GM12878 (cell line): ENCODE measurements at regions of chr1 and their contacts with region 1.

Region 1: GRCh38 chr1:119367427-119368124 is 1.0 kb upstream of the HAO2 start:
- DNase-seq: no peak
- ATAC-seq: peak; percentile 82
- H3K4me3 ChIP-seq: no peak overlapping the region
- H3K27ac ChIP-seq: no peak overlapping the region
- H3K4me1 ChIP-seq: peaks cover 5% of the 10 kb centered on the region; the same call in 1 of the 2 replicates
- H3K27me3 ChIP-seq: no peaks in the 10 kb centered on the region
- CTCF ChIP-seq: peak; percentile 93 to 98 (median 94); a peak in 5 of 6 replicates
- EP300 ChIP-seq: no peak
- POLR2A ChIP-seq: no peak
- RAD21 ChIP-seq: peak; percentile 99

Region 2: DNA sequence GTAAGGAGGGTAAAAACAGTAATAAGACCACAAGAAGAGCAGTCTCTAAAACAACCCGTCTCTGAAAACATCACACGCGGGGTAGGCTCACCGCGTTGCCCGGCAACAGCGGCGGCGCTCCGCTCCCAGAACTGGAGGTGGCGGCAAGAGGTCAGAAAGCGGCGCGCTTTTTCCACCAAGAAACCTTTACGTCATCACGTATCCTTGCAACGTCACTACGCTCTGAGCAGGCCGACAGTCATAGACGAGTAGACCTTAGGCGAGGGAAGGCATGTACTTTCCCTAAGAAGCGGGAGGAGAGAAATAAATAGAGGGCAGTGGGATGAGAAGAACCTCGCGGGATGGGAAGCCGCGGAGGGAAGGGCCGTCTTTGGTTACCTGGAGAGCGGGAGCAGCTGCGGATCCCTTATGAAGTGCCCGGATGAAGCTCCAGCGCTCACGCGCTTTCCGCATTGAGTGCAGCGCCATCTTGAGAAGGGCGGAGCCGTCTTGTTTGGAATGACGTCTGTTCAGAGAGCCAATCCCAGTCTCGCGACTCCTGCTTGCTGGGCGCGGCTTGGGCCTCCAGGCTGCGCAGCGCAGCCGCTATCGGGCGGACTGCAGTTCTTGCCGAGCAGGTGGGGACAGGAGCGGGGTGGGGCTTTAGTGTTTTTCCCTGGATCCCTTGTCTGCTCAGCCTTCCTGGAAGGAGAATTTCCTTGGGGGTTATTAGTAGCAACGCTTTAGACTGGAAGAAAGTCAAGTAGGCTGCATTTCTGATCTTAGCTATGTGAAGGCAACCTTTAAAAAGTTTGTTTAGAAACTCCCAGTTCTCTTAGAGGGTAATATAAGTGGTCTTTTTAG is 227.2 kb before region 1 on chr1 and contains the start of gene WARS2:
- CTCF ChIA-PET with region 1: interaction called, 8 read pairs
- POLR2A ChIA-PET with region 1: no interaction called
- RAD21 ChIA-PET with region 1: interaction called, 7 read pairs
- SMC1A ChIA-PET with region 1: no interaction called
- in situ Hi-C with region 1: no loop called
- intact Hi-C with region 1: loop called (anchors 10 kb)
- DNase-seq: peak; percentile 93
- ATAC-seq: peak; percentile 96
- H3K4me3 ChIP-seq: peak within 1 kb of the TSS; percentile 74
- H3K27ac ChIP-seq: peak within 1 kb of the TSS; percentile 99
- H3K4me1 ChIP-seq: no peaks in the 10 kb centered on the region
- H3K27me3 ChIP-seq: no peaks in the 10 kb centered on the region
- CTCF ChIP-seq: peak in 2 of 3 experiments; percentile 1 to 30; a peak in 2 of 6 replicates
- EP300 ChIP-seq: peak in 1 of 2 experiments; percentile 12; a peak in 1 of 4 replicates
- POLR2A ChIP-seq: peak; percentile 92
- RAD21 ChIP-seq: no peak
- polyA plus RNA-seq, gene WARS2: 5.5 to 5.9 TPM

Region 3: DNA sequence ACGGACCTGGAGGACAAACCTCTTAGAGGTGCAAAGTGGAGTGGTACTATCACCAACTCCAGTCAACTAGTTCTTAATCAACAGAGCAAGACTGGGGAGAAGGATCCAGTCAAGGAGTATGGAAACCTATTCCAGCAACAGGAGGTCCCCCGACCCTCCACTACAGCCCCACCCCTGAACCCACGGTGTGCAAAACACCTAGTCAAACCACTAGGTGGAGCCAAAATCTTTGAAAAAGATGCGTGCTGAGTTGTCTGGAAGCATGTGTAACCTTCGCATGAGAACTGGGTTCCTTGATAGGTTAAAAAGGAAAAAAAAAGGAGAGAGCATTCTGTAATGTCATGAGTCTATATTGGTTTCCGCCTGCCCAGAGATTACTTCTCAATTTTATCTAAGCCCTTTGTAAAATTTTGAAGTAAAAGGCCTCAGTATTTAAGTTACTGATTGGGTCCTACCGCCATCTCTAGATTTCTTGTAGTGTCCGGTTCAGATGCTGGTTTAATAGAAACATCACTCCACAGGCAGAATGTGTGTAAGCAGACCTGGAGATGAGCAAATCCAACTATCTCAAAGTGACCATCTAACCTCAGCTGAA is 80.9 kb before region 1 on chr1:
- CTCF ChIA-PET with region 1: interaction called, 137 read pairs
- POLR2A ChIA-PET with region 1: interaction called, 4 read pairs
- RAD21 ChIA-PET with region 1: interaction called, 63 read pairs
- SMC1A ChIA-PET with region 1: interaction called, 68 read pairs
- in situ Hi-C with region 1: loop called (anchors 5 kb)
- intact Hi-C with region 1: loop called (anchors 1 kb)
- DNase-seq: no peak
- ATAC-seq: peak; percentile 98
- H3K4me3 ChIP-seq: no peak overlapping the region
- H3K27ac ChIP-seq: no peak overlapping the region
- H3K4me1 ChIP-seq: no peaks in the 10 kb centered on the region
- H3K27me3 ChIP-seq: no peaks in the 10 kb centered on the region
- CTCF ChIP-seq: peak; percentile 67 to 73 (median 72)
- EP300 ChIP-seq: no peak
- POLR2A ChIP-seq: no peak
- RAD21 ChIP-seq: peak; percentile 97

Region 4: GRCh38 chr1:119298687-119299303 is 68.8 kb before region 1 on chr1:
- CTCF ChIA-PET with region 1: interaction called, 27 read pairs
- POLR2A ChIA-PET with region 1: interaction called, 3 read pairs
- RAD21 ChIA-PET with region 1: interaction called, 9 read pairs
- SMC1A ChIA-PET with region 1: interaction called, 16 read pairs
- in situ Hi-C with region 1: no loop called
- intact Hi-C with region 1: no loop called
- DNase-seq: no peak
- ATAC-seq: peak; percentile 41
- H3K4me3 ChIP-seq: no peak overlapping the region
- H3K27ac ChIP-seq: no peak overlapping the region
- H3K4me1 ChIP-seq: no peaks in the 10 kb centered on the region
- H3K27me3 ChIP-seq: peaks cover 0 to 3% of the 10 kb centered on the region in 2 experiments; a peak in 1 of 4 replicates
- CTCF ChIP-seq: no peak
- EP300 ChIP-seq: no peak
- POLR2A ChIP-seq: no peak
- RAD21 ChIP-seq: no peak

Region 5: DNA sequence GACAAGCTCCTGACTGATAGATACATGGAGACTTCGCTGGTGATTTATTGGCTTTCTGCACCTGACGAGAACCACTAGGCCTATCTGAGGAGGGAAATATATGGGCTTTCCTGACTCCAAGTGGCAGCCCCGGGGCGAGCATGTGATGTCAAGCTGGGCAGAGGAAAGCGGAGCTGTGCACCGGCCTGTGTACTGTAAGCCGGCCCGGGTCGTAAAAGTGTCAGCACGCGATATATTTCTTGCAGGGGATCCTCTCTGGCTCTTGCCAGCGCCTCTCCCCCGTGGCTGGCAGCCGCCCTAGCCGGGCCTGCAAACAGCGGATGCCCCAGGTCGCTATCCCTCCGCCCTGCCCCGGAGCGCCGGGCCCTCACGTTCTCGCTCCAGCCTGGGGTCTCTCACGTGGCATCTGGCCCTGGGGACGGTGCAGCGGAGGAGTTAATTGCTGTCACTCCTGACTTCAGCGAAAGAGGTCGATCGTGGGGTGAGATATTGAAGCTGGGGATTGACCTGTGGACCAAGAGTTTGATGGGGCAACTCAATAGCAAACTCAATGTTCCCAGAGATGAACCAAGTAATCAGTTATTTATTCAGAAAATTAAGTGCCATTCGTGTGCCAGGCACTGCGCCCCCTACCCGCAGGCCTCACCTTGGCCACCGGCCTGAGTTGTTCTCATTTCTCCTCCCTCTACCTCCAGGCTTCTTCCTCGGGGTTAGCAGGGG is 40.0 kb before region 1 on chr1:
- CTCF ChIA-PET with region 1: interaction called, 16 read pairs
- POLR2A ChIA-PET with region 1: no interaction called
- RAD21 ChIA-PET with region 1: interaction called, 31 read pairs
- SMC1A ChIA-PET with region 1: interaction called, 43 read pairs
- in situ Hi-C with region 1: no loop called
- intact Hi-C with region 1: loop called (anchors 1 kb)
- DNase-seq: no peak
- ATAC-seq: peak; percentile 24
- H3K4me3 ChIP-seq: peak overlapping the region; percentile 20; the same call in 1 of the 2 replicates
- H3K27ac ChIP-seq: no peak overlapping the region
- H3K4me1 ChIP-seq: peaks cover 24% of the 10 kb centered on the region
- H3K27me3 ChIP-seq: no peaks in the 10 kb centered on the region
- CTCF ChIP-seq: peak; percentile 39 to 60 (median 46)
- EP300 ChIP-seq: no peak
- POLR2A ChIP-seq: no peak
- RAD21 ChIP-seq: peak; percentile 20; the same call in 1 of the 2 replicates

Region 6: GRCh38 chr1:119440721-119441307 is 73.2 kb after region 1 on chr1:
- CTCF ChIA-PET with region 1: no interaction called
- POLR2A ChIA-PET with region 1: no interaction called
- RAD21 ChIA-PET with region 1: no interaction called
- SMC1A ChIA-PET with region 1: no interaction called
- in situ Hi-C with region 1: no loop called
- intact Hi-C with region 1: no loop called
- DNase-seq: no peak
- ATAC-seq: no peak
- H3K4me3 ChIP-seq: no peak overlapping the region
- H3K27ac ChIP-seq: no peak overlapping the region
- H3K4me1 ChIP-seq: no peaks in the 10 kb centered on the region
- H3K27me3 ChIP-seq: no peaks in the 10 kb centered on the region
- CTCF ChIP-seq: no peak
- EP300 ChIP-seq: no peak
- POLR2A ChIP-seq: no peak
- RAD21 ChIP-seq: no peak